HepG2 (cell line): ENCODE measurements at regions of chr2 and their contacts with region 1.

Region 1: DNA sequence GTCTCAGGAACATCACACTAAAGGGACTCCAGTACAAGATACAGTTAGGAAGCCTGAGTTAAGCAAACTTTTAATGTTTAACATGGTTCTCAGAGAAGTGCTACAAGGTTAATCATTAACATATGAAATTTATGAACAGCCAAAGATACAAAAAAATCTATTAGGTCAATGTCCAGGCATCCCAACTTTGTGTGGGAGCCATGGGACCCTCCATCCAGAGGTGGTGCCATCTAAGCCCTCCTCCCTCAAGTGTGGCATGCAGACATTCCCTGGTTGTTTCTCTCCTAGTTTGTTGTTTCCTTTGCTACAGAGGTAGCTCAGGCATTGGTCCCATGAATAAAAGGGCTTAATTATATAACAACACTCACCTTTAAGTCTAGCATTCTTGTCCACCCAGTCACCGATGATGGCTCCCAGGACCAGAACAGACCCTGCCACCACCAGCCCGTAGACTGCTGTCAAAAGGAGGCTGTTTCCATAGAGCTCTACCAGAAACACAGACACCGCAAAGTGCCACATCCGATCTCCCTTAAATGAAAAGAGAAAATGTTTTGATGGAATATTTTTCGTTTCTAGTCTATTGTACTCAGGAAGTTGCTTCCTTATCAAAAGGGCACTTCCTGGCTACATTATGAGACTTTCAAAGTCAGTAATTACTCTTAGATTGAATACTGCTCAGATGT is 5.7 kb downstream of the SLC40A1 start:
- DNase-seq: peak; percentile 76
- ATAC-seq: peak; percentile 96
- H3K4me3 ChIP-seq: no peak overlapping the region
- H3K27ac ChIP-seq: peak overlapping the region; percentile 5
- H3K4me1 ChIP-seq: peaks cover 75% of the 10 kb centered on the region
- H3K27me3 ChIP-seq: no peaks in the 10 kb centered on the region
- CTCF ChIP-seq: no peak
- EP300 ChIP-seq: no peak
- POLR2A ChIP-seq: no peak
- RAD21 ChIP-seq: no peak

Region 2: GRCh38 chr2:189549449-189549832 is 25.5 kb before region 1 on chr2:
- CTCF ChIA-PET with region 1: no interaction called
- POLR2A ChIA-PET with region 1: interaction called, 18 read pairs
- in situ Hi-C with region 1: no loop called
- intact Hi-C with region 1: loop called (anchors 2 kb)
- DNase-seq: no peak
- ATAC-seq: peak; percentile 19; the same call in 2 of the 3 replicates
- H3K4me3 ChIP-seq: no peak overlapping the region
- H3K27ac ChIP-seq: peak overlapping the region; percentile 54
- H3K4me1 ChIP-seq: peaks cover 46% of the 10 kb centered on the region
- H3K27me3 ChIP-seq: no peaks in the 10 kb centered on the region
- CTCF ChIP-seq: no peak
- EP300 ChIP-seq: no peak
- POLR2A ChIP-seq: no peak
- RAD21 ChIP-seq: no peak

Region 3: GRCh38 chr2:189587780-189588179 is 12.8 kb after region 1 on chr2:
- CTCF ChIA-PET with region 1: no interaction called
- POLR2A ChIA-PET with region 1: no interaction called
- in situ Hi-C with region 1: no loop called
- intact Hi-C with region 1: no loop called
- DNase-seq: no peak
- ATAC-seq: no peak
- H3K4me3 ChIP-seq: no peak overlapping the region
- H3K27ac ChIP-seq: no peak overlapping the region
- H3K4me1 ChIP-seq: peaks cover 12% of the 10 kb centered on the region
- H3K27me3 ChIP-seq: no peaks in the 10 kb centered on the region
- CTCF ChIP-seq: no peak
- EP300 ChIP-seq: no peak
- POLR2A ChIP-seq: no peak
- RAD21 ChIP-seq: no peak

Region 4: DNA sequence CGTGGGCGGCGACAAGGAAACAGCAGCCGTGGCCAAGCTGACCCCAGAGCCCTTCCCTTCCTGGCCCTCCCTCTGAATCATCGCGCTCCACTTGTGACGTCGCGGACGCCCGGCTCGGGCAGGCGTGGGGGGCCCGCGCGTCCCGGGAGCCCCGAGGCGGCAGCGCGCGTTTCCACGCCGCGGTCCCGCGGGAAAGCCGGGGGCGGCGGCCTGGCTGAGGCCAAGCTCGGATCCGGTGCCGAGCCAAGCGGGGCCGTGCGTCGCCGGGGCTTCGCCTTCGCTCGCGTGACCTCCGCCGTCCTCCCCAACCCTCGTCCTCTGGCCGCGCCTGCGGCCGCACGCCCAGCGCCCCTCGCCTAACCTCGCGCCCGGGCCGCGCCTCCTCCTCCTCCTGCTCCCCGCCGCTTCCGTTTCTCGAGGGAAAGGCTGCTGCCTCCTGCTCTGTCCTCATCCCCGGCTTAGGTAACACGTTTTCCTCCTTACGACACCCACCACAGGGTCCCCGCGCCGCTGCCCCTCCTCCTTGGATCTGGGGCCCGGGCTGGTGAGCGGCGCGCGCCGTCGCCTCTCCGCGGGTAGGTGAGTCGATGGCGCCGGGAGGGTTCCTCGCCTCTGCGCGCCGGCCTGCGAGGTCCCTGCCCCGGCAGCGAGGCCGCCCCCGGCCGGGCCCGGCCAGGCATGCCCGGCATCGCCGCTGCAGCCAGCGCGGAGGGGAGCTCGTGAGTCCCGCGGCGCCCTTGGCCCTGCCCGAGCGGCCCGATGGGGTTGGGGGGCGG is 768.8 kb after region 1 on chr2 and contains the start of gene INPP1:
- CTCF ChIA-PET with region 1: no interaction called
- POLR2A ChIA-PET with region 1: no interaction called
- in situ Hi-C with region 1: no loop called
- intact Hi-C with region 1: no loop called
- DNase-seq: no peak
- ATAC-seq: peak; percentile 88
- H3K4me3 ChIP-seq: peak within 1 kb of the TSS; percentile 71 to 92 (median 75)
- H3K27ac ChIP-seq: peak within 1 kb of the TSS; percentile 59
- H3K4me1 ChIP-seq: peaks cover 50% of the 10 kb centered on the region
- H3K27me3 ChIP-seq: no peaks in the 10 kb centered on the region
- CTCF ChIP-seq: no peak
- EP300 ChIP-seq: no peak
- POLR2A ChIP-seq: peak in 1 of 2 experiments; percentile 30; a peak in 1 of 4 replicates
- RAD21 ChIP-seq: peak; percentile 77; the same call in 1 of the 2 replicates
- total RNA-seq, gene INPP1: 13.3 and 15.2 TPM in 2 replicates